Left lung (tissue), 14 donors: ENCODE measurements at regions of chr9 and their contacts with region 1.

Region 1: DNA sequence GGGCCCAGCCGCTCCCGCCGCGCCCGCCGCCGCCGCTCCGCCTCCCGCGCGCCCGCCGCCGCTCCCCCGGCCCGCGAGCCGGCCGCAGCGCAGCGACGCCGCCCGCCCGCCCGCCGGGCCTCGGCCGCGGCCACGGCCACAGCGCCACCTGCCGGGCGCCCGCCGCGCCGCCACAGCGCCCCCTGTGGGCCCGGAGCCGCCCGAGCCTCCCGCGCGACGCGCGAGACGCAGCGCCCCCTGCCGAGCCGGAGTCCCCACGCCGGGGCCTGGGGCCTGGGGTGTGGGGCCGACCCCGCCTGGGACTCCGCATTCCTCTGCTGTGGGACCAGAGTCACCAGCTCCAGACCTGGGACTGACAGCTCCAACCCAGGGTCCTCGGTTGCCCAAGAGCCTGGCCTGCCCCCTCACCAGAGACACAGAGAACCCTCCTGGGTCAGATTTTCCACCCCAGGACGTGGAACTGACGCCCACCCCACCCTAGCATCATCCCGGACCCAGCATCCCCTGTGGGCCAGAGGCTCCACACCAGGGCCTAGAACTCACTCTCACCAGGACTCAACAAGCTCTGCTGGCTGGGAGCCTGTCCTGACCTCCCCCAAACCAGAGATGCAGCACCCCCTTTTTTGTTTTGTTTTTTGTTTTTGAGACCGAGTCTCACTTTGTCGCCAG is at the start of gene RAPGEF1:
- DNase-seq: peak; percentile 45 to 98 (median 63)
- ATAC-seq: peak; percentile 87
- H3K4me3 ChIP-seq: peak within 1 kb of the TSS; percentile 60 to 63
- H3K27ac ChIP-seq: peak within 1 kb of the TSS; percentile 87 to 91
- H3K4me1 ChIP-seq: peaks cover 5 to 50% of the 10 kb centered on the region in 2 donors
- H3K27me3 ChIP-seq: no peaks in the 10 kb centered on the region
- CTCF ChIP-seq: peak; percentile 82 to 90
- polyA plus RNA-seq, gene RAPGEF1: 37.5 to 48.1 (median 43.1) TPM

Region 2: DNA sequence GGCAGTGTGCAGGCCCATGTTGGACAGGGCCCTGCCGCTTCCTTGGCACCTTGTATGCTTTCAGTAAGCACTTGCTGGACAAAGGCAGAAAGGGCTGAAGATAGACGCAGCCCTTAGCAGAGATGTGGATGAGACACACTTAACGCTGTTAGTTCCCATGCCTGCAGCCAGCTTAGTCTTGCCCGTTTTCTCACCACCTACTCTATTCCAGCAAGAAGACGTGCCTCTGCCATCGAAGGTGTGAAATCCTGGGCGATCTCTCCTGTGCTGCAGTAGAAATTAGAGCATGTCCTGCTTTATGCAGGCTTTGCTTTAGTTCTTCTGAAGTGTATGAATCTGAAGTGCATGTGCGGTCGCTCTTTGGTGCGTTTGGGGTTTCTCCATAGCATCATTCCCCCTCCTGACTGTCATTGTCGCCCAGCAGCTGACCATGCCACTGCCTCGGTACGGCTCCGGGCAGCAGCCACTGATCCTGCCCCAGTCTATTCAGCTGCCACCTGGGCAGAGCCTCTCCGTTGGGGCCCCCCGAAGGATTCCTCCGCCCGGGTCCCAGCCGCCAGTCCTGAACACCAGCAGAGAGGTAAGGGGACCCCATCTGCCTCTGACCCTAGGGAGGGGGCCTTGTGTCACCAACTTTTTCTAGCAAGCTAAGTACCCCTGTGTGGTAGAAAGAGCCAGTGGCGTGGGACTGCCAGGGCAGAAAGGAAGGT is 249.0 kb before region 1 on chr9:
- intact Hi-C with region 1: loop called in 1 of 2 experiments (anchors 10 kb)
- DNase-seq: peak in 1 of 4 donors; percentile 50
- ATAC-seq: no peak
- H3K4me3 ChIP-seq: no peak overlapping the region
- H3K27ac ChIP-seq: no peak overlapping the region
- H3K4me1 ChIP-seq: no peaks in the 10 kb centered on the region
- H3K27me3 ChIP-seq: no peaks in the 10 kb centered on the region
- CTCF ChIP-seq: no peak

Region 3: DNA sequence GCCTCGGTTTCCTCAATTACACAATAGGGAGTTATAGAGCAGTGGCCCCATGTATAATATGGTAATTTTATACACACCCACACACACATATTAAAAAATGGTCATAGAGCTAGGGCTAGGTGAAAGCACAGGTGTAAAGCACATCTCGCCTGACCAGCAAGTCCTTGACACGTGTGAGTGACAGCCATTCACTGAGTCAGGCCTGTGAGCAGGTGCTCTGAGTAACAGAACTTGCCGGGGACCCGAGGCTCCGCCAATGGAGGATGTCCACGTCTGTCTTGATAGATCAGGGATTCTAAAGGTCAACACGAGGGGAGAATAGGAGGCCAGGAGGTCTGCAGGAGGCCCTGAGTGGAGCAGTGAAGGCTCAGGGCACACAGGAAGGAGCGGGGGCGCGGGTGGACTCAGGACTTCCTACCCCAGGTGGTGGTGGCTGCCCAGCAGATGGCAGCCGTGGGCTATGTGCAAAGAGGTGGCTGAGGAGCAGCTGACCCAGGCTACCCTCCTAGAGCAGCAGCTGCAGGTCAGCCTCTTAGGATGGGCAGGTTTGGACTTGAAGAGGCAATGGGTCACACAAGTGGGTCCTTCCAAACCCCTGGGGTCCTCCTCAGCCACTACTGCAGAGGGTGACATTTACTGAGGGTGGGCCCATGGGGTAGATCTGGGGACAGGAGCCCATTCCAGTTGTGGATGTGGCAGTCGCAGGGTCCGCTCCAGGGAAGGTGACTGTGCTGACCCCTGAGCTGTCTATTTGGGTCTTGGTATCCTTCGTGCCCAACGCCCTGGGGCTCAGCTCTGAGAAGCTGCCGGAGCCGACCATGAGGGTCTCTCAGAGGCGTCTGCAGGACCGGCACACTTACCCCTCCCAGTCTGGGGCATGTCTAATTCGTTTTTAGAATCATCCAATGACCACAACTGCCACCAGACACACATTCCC is 148.9 kb before region 1 on chr9:
- intact Hi-C with region 1: loop called (anchors 2 to 10 kb)
- DNase-seq: peak; percentile 41 to 96 (median 84)
- ATAC-seq: peak; percentile 96
- H3K4me3 ChIP-seq: no peak overlapping the region
- H3K27ac ChIP-seq: no peak overlapping the region
- H3K4me1 ChIP-seq: peaks cover 0 to 52% of the 10 kb centered on the region in 2 donors
- H3K27me3 ChIP-seq: no peaks in the 10 kb centered on the region
- CTCF ChIP-seq: peak; percentile 68 to 82

Region 4: DNA sequence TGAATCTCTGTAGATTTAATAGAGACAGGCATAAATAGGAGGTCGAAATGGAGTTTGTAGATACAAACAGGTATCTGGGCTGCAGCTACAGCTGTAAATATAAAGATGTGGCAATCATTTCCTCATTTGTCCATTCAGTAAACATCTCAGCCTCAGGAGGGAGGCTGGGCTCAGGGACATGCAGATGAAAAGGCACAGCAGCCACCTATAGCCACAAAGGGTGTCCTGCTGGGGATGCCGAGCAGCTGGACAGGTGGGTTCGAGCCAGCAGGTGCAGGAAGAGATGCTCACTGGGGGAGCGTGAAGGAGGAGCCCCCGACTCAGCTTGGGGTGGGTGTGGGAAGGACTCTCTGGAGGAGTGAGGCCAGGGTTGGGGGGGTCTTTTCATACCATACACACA is 48.2 kb after region 1 on chr9:
- intact Hi-C with region 1: no loop called
- DNase-seq: no peak
- ATAC-seq: no peak
- H3K4me3 ChIP-seq: no peak overlapping the region
- H3K27ac ChIP-seq: no peak overlapping the region
- H3K4me1 ChIP-seq: no peaks in the 10 kb centered on the region
- H3K27me3 ChIP-seq: peaks cover 0 to 67% of the 10 kb centered on the region in 2 donors
- CTCF ChIP-seq: no peak

Region 5: GRCh38 chr9:132079391-132080091 is 339.4 kb after region 1 on chr9 and contains the start of gene MED27:
- intact Hi-C with region 1: no loop called
- DNase-seq: peak; percentile 88 to 96 (median 94)
- ATAC-seq: peak; percentile 98
- H3K4me3 ChIP-seq: peak within 1 kb of the TSS; percentile 86 to 93
- H3K27ac ChIP-seq: peak within 1 kb of the TSS in 1 of 2 donors; percentile 61
- H3K4me1 ChIP-seq: peaks cover 14 to 28% of the 10 kb centered on the region in 2 donors
- H3K27me3 ChIP-seq: peaks cover 0 to 9% of the 10 kb centered on the region in 2 donors
- CTCF ChIP-seq: no peak
- polyA plus RNA-seq, gene MED27: 14.8 to 18.6 (median 16.7) TPM